ENCODE measurements at regions of chr19 and their contacts with region 1.

Region 1: DNA sequence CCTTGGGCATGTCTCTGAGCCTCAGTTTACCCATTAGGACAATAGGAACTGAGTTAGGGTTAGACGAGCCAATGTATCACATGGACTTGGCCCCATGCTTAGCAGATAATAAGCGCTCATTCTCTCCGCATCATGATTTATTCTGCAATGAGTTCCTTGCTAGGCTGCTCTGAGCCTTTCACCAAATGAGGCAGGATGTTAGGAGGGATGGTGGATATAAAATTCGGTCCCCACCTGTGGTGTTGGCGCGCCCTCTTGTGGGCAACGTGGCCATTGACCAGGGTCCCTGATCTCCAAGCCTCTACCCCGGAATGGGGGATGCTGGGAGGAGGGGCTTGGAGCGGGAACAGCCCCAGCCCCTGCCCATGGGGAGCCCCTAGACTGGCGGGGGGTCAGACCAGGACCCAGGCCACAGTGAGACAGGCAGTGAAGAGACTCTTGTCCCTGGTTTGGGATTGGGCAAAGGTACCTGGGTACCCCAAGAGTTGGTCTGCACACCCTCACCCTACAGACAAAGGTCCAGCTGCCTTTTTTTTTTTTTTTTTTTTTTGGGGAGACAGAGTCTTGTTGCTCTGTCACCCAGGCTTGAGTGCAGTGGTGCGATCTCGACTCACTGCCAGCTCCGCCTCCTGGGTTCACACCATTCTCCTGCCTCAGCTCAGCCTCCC is 43.9 kb downstream of the CERS4 start:
- DNase-seq: peak; percentile 84 to 95
- ATAC-seq: peak; percentile 88
- H3K4me3 ChIP-seq: no peak overlapping the region
- H3K27ac ChIP-seq: no peak overlapping the region
- H3K4me1 ChIP-seq: no peaks in the 10 kb centered on the region
- H3K27me3 ChIP-seq: no peaks in the 10 kb centered on the region

Region 2: GRCh38 chr19:8158411-8159074 is 94.5 kb before region 1 on chr19:
- intact Hi-C with region 1: loop called (anchors 2 to 5 kb)
- DNase-seq: no peak
- ATAC-seq: peak; percentile 70
- H3K4me3 ChIP-seq: no peak overlapping the region
- H3K27ac ChIP-seq: no peak overlapping the region
- H3K4me1 ChIP-seq: no peaks in the 10 kb centered on the region
- H3K27me3 ChIP-seq: no peaks in the 10 kb centered on the region

Region 3: DNA sequence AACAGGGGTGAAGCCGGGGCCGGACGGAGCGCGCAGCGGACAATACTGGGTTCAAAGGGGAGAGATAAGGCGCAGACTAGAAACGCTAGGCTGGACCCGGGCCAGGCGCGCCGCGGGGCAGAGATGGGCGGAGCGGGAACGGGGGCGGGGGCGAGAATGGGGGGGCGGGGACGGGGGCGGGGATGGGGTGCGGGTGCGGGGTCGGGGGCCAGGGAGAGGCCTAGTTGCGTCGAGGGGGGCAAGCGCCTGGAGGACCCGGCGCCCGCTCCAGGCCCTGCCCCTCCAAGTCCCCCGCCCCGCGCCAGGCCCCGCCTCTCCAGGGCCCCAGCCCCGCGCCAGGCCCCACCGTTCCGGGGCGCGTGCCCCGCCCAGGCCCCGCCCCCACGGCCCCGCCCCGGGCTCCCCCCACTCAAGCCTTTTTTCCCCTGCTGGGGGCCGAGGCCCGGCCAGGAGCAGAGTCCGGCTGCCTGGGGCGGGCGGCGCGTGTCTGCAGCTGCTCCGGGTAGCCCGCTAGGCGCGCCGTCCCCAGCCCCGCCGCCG is 44.1 kb before region 1 on chr19 and contains the start of gene CERS4:
- intact Hi-C with region 1: loop called in 1 of 2 experiments (anchors 5 kb)
- DNase-seq: peak; percentile 86 to 92
- ATAC-seq: peak; percentile 86
- H3K4me3 ChIP-seq: peak within 1 kb of the TSS; percentile 85 to 89
- H3K27ac ChIP-seq: no peak within 1 kb of the TSS
- H3K4me1 ChIP-seq: no peaks in the 10 kb centered on the region
- H3K27me3 ChIP-seq: no peaks in the 10 kb centered on the region
- total RNA-seq, gene CERS4: 23.6 to 33.7 TPM

Measured in aorta (tissue), 5 donors.